K562 (cell line): ENCODE measurements at regions of chr2 and their contacts with region 1.

Region 1: DNA sequence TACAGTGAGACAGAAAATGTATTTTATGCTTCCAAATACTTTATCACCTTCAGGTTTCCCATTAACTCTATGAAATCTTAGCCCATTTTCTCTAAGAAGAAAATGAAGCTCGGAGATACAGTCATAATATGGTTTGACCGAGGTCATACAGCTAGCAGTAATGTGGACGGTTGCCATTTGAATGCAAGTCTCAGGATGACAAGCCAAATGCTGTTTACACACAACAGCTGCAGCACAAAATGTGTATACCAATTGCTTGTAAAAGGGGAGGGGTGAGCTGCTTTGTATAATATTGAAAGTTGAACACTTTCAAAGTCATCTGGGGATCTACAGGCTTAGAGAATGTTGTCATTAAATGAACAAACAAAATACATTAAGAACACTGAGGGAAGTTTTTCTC is 93.8 kb upstream of the FSIP2 start:
- DNase-seq: no peak
- ATAC-seq: no peak
- H3K4me3 ChIP-seq: no peak overlapping the region
- H3K27ac ChIP-seq: no peak overlapping the region
- H3K4me1 ChIP-seq: no peaks in the 10 kb centered on the region
- H3K27me3 ChIP-seq: no peaks in the 10 kb centered on the region
- CTCF ChIP-seq: no peak
- EP300 ChIP-seq: no peak
- POLR2A ChIP-seq: no peak
- RAD21 ChIP-seq: no peak

Region 2: DNA sequence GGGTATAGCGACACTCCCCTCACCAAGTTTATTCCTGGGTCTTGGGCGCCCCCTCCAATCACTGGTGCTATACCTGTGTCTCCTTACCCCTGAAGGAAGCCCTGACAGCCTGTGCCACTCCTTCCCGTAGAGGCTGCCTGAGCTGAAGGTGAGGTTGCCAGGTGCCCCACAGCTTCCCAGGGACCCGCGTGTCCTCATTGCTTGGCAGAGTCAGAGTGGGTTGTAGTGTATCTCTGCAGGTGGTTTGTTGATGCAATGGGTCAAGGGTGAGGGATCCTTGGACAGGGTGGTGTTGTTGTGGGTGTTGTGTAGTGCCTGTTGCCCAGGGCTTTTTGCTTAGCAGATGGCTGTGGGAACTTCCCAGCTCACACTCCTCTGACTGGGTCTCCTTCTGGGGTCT is 345.0 kb before region 1 on chr2:
- CTCF ChIA-PET with region 1: no interaction called
- POLR2A ChIA-PET with region 1: no interaction called
- in situ Hi-C with region 1: no loop called
- intact Hi-C with region 1: loop called (anchors 5 kb)
- DNase-seq: no peak
- ATAC-seq: no peak
- H3K4me3 ChIP-seq: no peak overlapping the region
- H3K27ac ChIP-seq: no peak overlapping the region
- H3K4me1 ChIP-seq: no peaks in the 10 kb centered on the region
- H3K27me3 ChIP-seq: no peaks in the 10 kb centered on the region
- CTCF ChIP-seq: no peak
- EP300 ChIP-seq: no peak
- POLR2A ChIP-seq: no peak
- RAD21 ChIP-seq: no peak

Region 3: DNA sequence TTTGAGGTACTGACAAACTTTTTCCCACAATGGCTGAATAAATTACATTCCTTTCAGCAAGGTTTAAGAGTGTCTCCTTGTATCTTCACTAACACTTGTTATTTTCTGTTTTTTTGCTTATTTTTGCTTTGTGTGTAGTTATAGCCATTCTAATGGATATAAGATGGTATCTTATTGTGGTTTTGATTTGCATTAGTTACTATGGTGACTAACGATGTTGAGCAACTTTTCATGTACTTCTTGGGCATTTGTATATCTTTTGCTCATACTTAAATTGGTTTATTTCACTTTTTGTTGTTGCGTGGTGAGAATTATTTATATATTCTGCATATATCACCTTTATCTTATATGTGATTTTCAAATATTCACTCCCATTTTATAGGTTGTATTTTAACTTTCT is 13.9 kb after region 1 on chr2:
- CTCF ChIA-PET with region 1: no interaction called
- POLR2A ChIA-PET with region 1: no interaction called
- in situ Hi-C with region 1: no loop called
- intact Hi-C with region 1: no loop called
- DNase-seq: no peak
- ATAC-seq: no peak
- H3K4me3 ChIP-seq: no peak overlapping the region
- H3K27ac ChIP-seq: no peak overlapping the region
- H3K4me1 ChIP-seq: no peaks in the 10 kb centered on the region
- H3K27me3 ChIP-seq: no peaks in the 10 kb centered on the region
- CTCF ChIP-seq: no peak
- EP300 ChIP-seq: no peak
- POLR2A ChIP-seq: no peak
- RAD21 ChIP-seq: no peak

Region 4: GRCh38 chr2:185718713-185719112 is 73.9 kb after region 1 on chr2:
- CTCF ChIA-PET with region 1: no interaction called
- POLR2A ChIA-PET with region 1: no interaction called
- in situ Hi-C with region 1: no loop called
- intact Hi-C with region 1: no loop called
- DNase-seq: no peak
- ATAC-seq: no peak
- H3K4me3 ChIP-seq: no peak overlapping the region
- H3K27ac ChIP-seq: no peak overlapping the region
- H3K4me1 ChIP-seq: no peaks in the 10 kb centered on the region
- H3K27me3 ChIP-seq: no peaks in the 10 kb centered on the region
- CTCF ChIP-seq: no peak
- EP300 ChIP-seq: no peak
- POLR2A ChIP-seq: no peak
- RAD21 ChIP-seq: no peak